MCF 10A (cell line): ENCODE measurements at regions of chr5 and their contacts with region 1.

Region 1: GRCh38 chr5:127030259-127031146 is at the start of gene MARCHF3:
- DNase-seq: peak; percentile 98
- H3K4me3 Mint-ChIP-seq: peak within 1 kb of the TSS; percentile 84
- H3K27ac Mint-ChIP-seq: peak within 1 kb of the TSS; percentile 49
- H3K4me1 Mint-ChIP-seq: peaks cover 15% of the 10 kb centered on the region
- H3K27me3 Mint-ChIP-seq: no peaks in the 10 kb centered on the region
- CTCF ChIP-seq: peak; percentile 39
- total RNA-seq, gene MARCHF3: 5.4 and 6.9 TPM in 2 replicates

Region 2: DNA sequence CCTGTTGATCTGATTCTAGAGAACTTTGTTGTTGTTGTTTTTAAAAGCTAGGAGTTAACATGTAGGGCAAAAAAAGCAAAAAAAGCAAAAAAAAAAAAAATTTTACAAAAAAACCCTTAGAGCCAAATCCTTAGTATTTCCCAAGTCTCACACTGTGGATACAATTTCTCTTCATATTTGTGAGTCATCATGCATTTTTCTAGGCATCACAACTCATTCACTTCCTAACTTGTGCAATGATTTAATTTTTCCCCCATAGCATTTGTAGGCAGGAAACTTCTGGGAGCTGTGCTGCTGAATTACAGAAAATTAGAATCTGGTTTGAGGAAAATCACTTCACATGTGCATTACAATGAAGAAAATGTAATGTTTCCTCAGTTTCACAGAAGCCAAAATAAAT is 92.0 kb before region 1 on chr5:
- CTCF ChIA-PET with region 1: no interaction called
- POLR2A ChIA-PET with region 1: no interaction called
- intact Hi-C with region 1: loop called (anchors 1 kb)
- DNase-seq: peak; percentile 86
- H3K4me3 Mint-ChIP-seq: no peak overlapping the region
- H3K27ac Mint-ChIP-seq: peak overlapping the region; percentile 46
- H3K4me1 Mint-ChIP-seq: peaks cover 19% of the 10 kb centered on the region
- H3K27me3 Mint-ChIP-seq: no peaks in the 10 kb centered on the region
- CTCF ChIP-seq: no peak

Region 3: DNA sequence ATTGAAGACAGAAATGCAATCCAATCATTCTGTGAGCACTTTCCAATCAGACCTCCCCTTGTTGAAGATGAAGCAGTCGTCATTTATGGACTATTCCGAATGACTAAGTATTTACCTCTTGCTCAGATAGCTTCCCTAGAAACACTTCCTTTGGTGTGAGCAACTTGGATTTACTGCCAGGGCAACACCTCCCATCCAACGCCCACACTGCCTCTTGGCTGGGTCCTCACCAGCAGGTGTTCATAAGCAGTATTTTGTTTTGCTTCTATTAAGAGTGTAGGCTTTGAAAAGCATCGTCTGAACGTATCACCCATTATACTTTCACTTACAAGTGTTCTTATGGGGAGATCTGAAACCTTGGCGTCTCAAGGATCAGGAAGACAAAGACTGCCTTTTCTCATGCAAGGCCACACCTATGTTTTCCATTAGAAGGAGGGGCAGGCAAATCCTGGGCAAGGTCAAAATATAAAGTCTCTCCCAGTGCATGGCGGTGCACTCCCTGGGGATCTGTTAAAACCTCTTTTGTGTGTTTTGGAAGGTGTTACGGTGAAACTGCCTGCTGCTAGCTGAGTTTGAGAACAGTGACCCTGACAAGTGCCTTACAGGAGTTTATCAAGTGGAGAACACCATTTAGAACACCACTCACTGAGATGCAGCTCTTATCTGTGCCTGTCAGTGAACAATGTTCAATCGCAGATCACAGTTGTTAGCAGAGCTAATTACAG is 10.5 kb after region 1 on chr5:
- CTCF ChIA-PET with region 1: no interaction called
- POLR2A ChIA-PET with region 1: interaction called, 15 read pairs
- intact Hi-C with region 1: no loop called
- DNase-seq: peak; percentile 82
- H3K4me3 Mint-ChIP-seq: peak overlapping the region; percentile 63
- H3K27ac Mint-ChIP-seq: peak overlapping the region; percentile 95
- H3K4me1 Mint-ChIP-seq: peaks cover 27% of the 10 kb centered on the region
- H3K27me3 Mint-ChIP-seq: no peaks in the 10 kb centered on the region
- CTCF ChIP-seq: no peak

Region 4: DNA sequence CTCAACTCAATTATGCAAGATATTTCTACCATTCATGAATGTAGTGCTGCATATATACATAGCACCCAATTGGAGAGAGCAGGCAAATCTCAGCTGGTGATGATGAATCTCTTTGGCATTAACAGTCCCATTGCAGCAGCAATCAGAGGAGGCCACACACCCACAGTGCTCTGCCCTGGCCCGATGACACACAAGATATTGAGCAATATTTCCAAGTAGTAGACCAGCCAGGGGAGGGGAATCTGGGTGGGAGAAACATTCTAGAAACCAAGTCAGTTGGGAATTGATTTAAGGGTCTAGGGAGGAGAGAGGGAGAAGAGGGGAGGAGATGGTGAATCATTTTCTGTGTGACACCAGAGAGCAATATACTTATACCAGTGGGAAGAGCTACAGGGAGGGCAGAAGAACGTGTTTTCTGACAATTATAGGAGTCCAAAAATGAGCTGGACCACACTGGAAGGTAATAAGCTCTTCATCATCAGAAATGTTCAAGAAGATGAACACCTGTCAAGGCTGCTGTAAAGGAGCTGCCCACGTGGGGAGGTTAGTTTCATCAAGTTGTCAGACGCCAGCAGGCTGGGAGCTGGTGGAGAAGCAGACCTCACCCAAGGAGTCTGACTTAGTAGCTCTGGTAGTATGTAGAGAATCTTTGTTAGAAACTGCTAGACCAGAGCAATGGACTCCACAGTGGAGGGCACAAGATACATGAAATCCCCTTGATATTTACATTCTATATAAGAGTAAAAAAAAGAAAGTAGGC is 57.9 kb after region 1 on chr5:
- CTCF ChIA-PET with region 1: interaction called, 4 read pairs
- POLR2A ChIA-PET with region 1: interaction called, 3 read pairs
- intact Hi-C with region 1: loop called (anchors 1 kb)
- DNase-seq: peak; percentile 99
- H3K4me3 Mint-ChIP-seq: no peak overlapping the region
- H3K27ac Mint-ChIP-seq: peak overlapping the region; percentile 80
- H3K4me1 Mint-ChIP-seq: peaks cover 31% of the 10 kb centered on the region
- H3K27me3 Mint-ChIP-seq: no peaks in the 10 kb centered on the region
- CTCF ChIP-seq: no peak

Region 5: DNA sequence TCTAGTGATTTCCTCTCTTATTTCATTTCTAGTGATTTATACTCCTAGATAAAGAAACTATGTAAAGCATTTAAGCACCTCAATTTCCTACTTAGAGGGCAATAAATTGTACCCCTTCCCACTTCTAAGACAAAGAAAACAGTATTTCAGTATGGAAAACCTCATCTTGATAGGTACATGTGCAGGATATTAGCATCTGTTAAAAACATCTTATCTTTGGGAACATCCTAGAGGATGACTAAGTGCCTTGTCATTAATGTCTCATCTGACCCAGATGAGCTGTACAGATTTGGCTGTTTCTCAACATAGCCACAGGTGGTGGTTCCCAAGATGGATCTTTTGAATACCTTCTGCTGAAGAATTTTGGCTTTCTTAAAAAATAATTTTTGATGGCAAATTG is 265.8 kb after region 1 on chr5:
- CTCF ChIA-PET with region 1: no interaction called
- POLR2A ChIA-PET with region 1: no interaction called
- intact Hi-C with region 1: loop called (anchors 5 kb)
- DNase-seq: peak; percentile 79
- H3K4me3 Mint-ChIP-seq: no peak overlapping the region
- H3K27ac Mint-ChIP-seq: peak overlapping the region; percentile 25
- H3K4me1 Mint-ChIP-seq: peaks cover 13% of the 10 kb centered on the region
- H3K27me3 Mint-ChIP-seq: no peaks in the 10 kb centered on the region
- CTCF ChIP-seq: no peak